Aorta (tissue), 5 donors: ENCODE measurements at regions of chr20 and their contacts with region 1.

Region 1: GRCh38 chr20:37288091-37288490 is 1.4 kb upstream of the MANBAL start:
- DNase-seq: no peak
- ATAC-seq: no peak
- H3K4me3 ChIP-seq: no peak overlapping the region
- H3K27ac ChIP-seq: no peak overlapping the region
- H3K4me1 ChIP-seq: no peaks in the 10 kb centered on the region
- H3K27me3 ChIP-seq: no peaks in the 10 kb centered on the region

Region 2: DNA sequence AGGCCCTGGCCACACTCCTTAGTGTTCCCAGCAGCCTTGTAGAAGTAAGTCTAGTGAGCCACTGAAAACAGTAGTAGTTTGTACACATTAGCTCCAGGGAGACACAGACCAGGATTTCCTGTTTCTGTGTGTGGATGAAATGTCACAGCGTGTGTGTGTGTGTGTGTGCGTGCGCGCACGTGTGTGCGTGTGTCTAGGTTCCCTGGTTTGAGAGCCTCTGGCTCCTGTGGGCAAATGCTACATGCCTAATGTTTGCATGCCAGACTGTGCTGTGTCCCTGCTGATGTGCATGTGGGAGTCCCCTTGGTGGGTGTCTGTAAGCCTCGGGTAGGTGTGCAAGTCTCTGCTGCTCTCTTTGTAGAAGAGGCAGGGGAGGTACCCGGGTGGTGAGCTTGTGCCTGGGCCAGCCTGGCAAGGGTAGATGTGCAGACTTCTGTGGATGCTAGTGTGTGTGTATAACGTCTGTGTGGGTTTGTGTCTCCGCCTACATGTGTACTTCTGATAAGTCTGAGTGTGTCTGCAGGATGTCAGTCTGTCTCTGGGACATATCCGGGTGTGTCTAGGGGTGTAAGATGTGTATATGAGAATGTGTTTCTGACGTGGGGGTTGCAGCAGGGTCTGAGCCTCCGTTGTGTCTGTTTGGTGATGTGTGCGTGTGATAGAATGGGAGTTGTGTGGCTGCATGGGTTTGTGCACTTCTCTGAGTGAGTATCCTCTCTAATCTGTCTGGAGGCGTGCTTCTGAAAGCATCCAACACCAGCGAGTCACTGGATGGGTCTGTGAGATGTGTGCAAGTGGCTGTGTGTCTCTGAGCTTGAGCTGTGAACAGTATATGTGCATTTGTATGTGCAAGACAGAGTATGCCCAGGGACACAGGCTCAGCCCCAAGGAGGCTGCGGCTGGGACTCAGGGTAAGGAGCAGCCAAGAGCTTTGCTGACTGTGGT is 431.1 kb before region 1 on chr20:
- intact Hi-C with region 1: no loop called
- DNase-seq: peak in 1 of 2 donors; percentile 71
- ATAC-seq: no peak
- H3K4me3 ChIP-seq: no peak overlapping the region
- H3K27ac ChIP-seq: peak overlapping the region in 1 of 2 donors; percentile 68
- H3K4me1 ChIP-seq: no peaks in the 10 kb centered on the region
- H3K27me3 ChIP-seq: no peaks in the 10 kb centered on the region

Region 3: GRCh38 chr20:37270576-37271420 is 17.3 kb before region 1 on chr20:
- intact Hi-C with region 1: no loop called
- DNase-seq: peak; percentile 54 to 62
- ATAC-seq: peak; percentile 56
- H3K4me3 ChIP-seq: no peak overlapping the region
- H3K27ac ChIP-seq: no peak overlapping the region
- H3K4me1 ChIP-seq: no peaks in the 10 kb centered on the region
- H3K27me3 ChIP-seq: no peaks in the 10 kb centered on the region

Region 4: GRCh38 chr20:37345339-37346230 is 57.5 kb after region 1 on chr20 and contains the start of gene SRC:
- intact Hi-C with region 1: loop called (anchors 2 to 5 kb)
- DNase-seq: peak; percentile 91 to 95
- ATAC-seq: peak; percentile 78
- H3K4me3 ChIP-seq: peak within 1 kb of the TSS; percentile 87 to 96
- H3K27ac ChIP-seq: peak within 1 kb of the TSS; percentile 71 to 74
- H3K4me1 ChIP-seq: no peaks in the 10 kb centered on the region
- H3K27me3 ChIP-seq: no peaks in the 10 kb centered on the region
- total RNA-seq, gene SRC: 51.3 to 72.4 TPM